Heart right ventricle (tissue), 16 donors: ENCODE measurements at regions of chr12 and their contacts with region 1.

Region 1: DNA sequence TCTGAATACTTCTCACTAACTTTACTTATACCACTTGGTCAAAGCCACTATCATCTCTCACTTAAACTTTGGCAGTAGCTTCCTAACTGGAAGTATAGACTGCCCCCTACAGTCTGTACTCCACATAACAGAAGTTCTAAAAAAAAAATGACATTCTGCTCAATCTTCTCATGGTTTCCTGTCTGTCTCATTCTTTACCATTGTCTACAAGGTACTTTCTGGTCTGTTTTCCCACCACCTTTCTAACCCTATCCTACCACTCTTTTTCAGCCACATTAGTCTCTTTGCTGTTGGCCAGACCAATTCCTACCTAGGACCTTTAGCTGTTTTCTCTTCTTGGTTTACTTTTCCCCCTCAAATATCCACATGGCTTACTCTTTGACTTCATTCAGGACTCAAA is 14.7 kb downstream of the CPSF6 start:
- DNase-seq: no peak
- ATAC-seq: peak in 5 of 8 donors; percentile 31 to 57 (median 48)
- H3K4me3 ChIP-seq: no peak overlapping the region
- H3K27ac ChIP-seq: no peak overlapping the region
- H3K4me1 ChIP-seq: peaks cover 0 to 33% (median 17%) of the 10 kb centered on the region in 9 donors
- H3K27me3 ChIP-seq: no peaks in the 10 kb centered on the region
- CTCF ChIP-seq: peak; percentile 36 to 77 (median 69)

Region 2: DNA sequence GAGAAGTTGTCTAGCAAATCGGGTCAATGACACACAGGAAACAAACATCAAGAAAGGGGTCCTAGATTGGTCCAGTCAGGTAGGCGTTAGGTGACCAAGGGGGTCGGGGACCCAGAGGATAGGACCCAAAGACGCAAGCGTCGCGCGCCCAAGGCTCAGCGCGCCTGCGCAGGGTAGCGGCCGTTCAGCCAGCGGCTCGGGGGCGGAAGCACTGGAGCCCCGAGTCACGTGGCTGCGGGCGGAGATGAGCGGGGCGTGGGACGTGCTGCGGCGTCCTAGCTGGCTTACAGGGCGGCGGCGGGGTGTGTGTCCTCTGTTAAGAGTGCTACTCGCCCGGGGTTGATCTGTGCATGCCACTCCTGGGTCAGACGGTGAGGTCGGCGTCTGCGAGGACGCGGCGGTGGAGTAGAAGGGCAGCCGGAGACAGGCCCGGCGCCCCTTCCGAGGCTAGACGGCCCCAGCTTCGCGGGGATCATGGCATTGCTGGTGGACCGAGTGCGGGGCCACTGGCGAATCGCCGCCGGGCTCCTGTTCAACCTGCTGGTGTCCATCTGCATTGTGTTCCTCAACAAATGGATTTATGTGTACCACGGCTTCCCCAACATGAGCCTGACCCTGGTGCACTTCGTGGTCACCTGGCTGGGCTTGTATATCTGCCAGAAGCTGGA is 508.0 kb before region 1 on chr12 and contains the start of gene SLC35E3:
- intact Hi-C with region 1: no loop called
- DNase-seq: peak; percentile 91 to 94
- ATAC-seq: peak; percentile 100
- H3K4me3 ChIP-seq: peak within 1 kb of the TSS; percentile 62 to 88 (median 72)
- H3K27ac ChIP-seq: peak within 1 kb of the TSS; percentile 41 to 89 (median 79)
- H3K4me1 ChIP-seq: peaks cover 0 to 29% (median 17%) of the 10 kb centered on the region in 9 donors
- H3K27me3 ChIP-seq: no peaks in the 10 kb centered on the region
- CTCF ChIP-seq: no peak
- total RNA-seq, gene SLC35E3: 4.3 to 8.9 (median 6.6) TPM

Region 3: DNA sequence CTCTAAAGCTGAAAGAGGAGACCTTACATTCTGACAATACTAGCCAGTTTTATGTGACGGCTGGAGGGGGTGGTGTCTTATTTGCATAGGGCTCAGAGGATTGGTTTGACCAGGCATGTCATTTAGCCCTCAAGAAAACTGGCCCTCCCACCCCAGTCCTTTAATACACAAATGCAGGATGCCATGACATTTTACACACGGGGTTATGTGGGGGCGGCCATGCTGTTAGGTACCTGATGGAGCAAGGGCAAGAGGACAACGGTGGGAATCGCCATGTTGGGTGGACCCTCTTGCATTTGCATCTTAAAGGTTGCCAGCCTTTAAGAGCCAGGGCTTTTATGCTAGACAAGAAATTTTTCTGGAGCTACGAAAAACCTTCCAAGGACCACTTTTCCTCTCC is 422.8 kb before region 1 on chr12:
- intact Hi-C with region 1: loop called in 1 of 10 experiments (anchors 10 kb)
- DNase-seq: no peak
- ATAC-seq: no peak
- H3K4me3 ChIP-seq: no peak overlapping the region
- H3K27ac ChIP-seq: no peak overlapping the region
- H3K4me1 ChIP-seq: peaks cover 0 to 11% (median 0%) of the 10 kb centered on the region in 9 donors
- H3K27me3 ChIP-seq: no peaks in the 10 kb centered on the region
- CTCF ChIP-seq: no peak